Heart left ventricle (tissue), 16 donors: ENCODE measurements at regions of chr17 and their contacts with region 1.

Region 1: DNA sequence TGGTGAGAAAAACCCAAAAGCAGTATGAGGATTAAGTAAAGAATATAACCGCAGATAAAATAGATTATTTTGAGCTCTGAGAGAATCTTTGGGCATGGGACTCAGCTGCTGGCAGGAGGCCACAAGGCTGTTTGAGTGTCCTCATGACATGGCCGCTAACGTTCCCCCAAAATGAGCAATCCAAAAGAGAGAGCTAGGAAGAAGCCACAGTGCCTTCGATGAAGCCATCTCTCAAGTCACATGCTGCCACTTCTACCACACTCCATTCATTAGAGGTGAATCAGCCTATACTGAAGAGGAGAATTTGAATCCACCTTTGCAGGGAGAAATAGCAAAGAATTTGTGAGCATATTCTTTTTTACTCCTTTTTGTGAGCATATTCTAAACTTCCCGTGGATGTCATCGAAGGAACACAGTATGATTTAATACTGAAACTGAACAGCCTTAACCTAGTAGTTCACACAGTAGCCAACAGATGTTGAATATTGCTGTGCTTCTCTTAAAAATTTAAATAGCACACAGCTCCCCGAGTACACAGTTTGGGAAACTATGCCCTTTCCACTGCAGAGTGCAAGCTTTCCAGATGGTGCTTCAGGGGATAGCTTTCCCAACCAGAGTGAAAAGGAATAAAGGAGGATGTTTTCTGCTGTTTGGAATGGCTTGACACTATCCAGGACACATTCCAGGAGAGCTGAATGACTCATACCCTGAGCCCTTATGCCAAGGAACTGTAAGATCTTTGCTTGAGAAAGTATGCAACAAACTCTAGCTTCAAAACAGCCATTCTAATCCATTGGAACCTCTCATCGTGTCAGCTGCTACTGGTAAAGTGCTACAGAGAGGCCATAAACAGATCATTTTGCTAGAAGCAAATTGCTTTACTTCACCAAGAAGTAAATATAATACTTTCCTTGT is 33.9 kb downstream of the ANKFY1 start:
- DNase-seq: peak in 4 of 5 donors; percentile 40 to 64 (median 53)
- ATAC-seq: peak; percentile 88 to 95 (median 90)
- H3K4me3 ChIP-seq: peak overlapping the region in 4 of 12 donors; percentile 0 to 18 (median 10)
- H3K27ac ChIP-seq: peak overlapping the region; percentile 57 to 88 (median 79)
- H3K4me1 ChIP-seq: peaks cover 0 to 56% (median 36%) of the 10 kb centered on the region in 12 donors
- H3K27me3 ChIP-seq: no peaks in the 10 kb centered on the region
- CTCF ChIP-seq: no peak
- POLR2A ChIP-seq: no peak

Region 2: DNA sequence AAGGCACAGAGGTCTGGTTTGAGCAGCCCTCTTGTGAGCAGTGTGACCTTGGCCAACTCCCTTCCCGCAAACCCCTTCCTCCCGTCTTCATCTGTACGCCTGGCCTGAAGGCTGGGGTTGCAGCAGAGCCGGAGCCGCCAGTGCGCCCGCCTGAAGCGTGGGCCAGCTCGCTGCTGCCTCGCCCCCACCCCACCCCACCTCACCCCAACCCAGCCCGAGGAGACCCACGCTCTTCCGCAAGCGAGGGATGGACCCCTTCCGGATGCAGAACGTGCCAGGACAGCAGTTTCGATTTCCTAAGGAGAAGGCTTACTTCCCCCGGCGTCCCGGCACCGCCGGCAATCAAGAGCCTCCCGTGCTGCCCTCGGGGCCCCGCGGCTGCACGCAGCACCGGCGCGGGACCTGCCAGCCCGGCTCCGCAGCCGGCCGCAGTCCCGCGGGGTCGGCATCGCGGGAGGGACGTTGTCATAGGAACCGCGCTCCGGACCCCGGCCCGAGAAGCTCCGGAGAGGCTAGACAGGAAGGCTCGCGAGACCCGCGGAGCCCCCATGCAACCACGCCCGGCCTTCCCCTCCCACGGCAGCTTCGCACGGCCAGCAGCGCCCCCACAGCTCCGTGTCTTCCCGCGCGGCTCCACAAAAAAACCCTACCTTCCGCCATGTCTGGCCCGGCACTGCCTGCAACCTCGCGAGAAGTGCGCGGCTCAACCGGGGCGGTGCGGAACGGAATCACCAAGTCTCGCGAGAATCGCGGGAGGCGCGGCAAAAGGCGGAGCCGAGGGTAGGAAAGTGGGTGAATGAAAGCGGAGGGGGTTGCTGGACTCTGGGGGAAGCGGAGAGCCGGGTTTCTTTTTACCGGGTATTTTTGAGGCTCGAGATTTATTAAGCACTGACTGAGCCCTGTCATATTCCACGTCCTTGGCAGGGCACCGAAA is 33.7 kb after region 1 on chr17 and contains the start of gene ANKFY1:
- intact Hi-C with region 1: loop called in 1 of 10 experiments (anchors 5 kb)
- DNase-seq: peak; percentile 97 to 99 (median 97)
- ATAC-seq: peak; percentile 93 to 98 (median 96)
- H3K4me3 ChIP-seq: peak within 1 kb of the TSS; percentile 83 to 99 (median 97)
- H3K27ac ChIP-seq: peak within 1 kb of the TSS; percentile 74 to 95 (median 90)
- H3K4me1 ChIP-seq: peaks cover 0 to 34% (median 19%) of the 10 kb centered on the region in 12 donors
- H3K27me3 ChIP-seq: no peaks in the 10 kb centered on the region
- CTCF ChIP-seq: peak in 5 of 12 donors; percentile 15 to 38 (median 34)
- POLR2A ChIP-seq: peak in 1 of 2 donors; percentile 87
- total RNA-seq, gene ANKFY1: 20.6 to 44.9 (median 24.9) TPM